ENCODE measurements at regions of chr10 and their contacts with region 1.

Region 1: GRCh38 chr10:71753091-71753959 is 20.0 kb downstream of the VSIR start:
- DNase-seq: peak; percentile 64 to 74
- H3K4me3 ChIP-seq: no peak overlapping the region
- H3K4me3 Mint-ChIP-seq: peak overlapping the region; percentile 46
- H3K27ac Mint-ChIP-seq: peak overlapping the region; percentile 88
- H3K4me1 ChIP-seq: peaks cover 36% of the 10 kb centered on the region
- H3K4me1 Mint-ChIP-seq: peaks cover 40% of the 10 kb centered on the region
- H3K27me3 ChIP-seq: no peaks in the 10 kb centered on the region
- H3K27me3 Mint-ChIP-seq: no peaks in the 10 kb centered on the region
- CTCF ChIP-seq: peak in 1 of 2 experiments; percentile 21

Region 2: GRCh38 chr10:71727738-71728737 is 25.3 kb before region 1 on chr10:
- CTCF ChIA-PET with region 1: no interaction called
- POLR2A ChIA-PET with region 1: no interaction called
- intact Hi-C with region 1: loop called (anchors 2 kb)
- DNase-seq: no peak
- H3K4me3 ChIP-seq: no peak overlapping the region
- H3K4me3 Mint-ChIP-seq: no peak overlapping the region
- H3K27ac Mint-ChIP-seq: no peak overlapping the region
- H3K4me1 ChIP-seq: peaks cover 17% of the 10 kb centered on the region
- H3K4me1 Mint-ChIP-seq: peaks cover 15% of the 10 kb centered on the region
- H3K27me3 ChIP-seq: no peaks in the 10 kb centered on the region
- H3K27me3 Mint-ChIP-seq: no peaks in the 10 kb centered on the region
- CTCF ChIP-seq: no peak

Region 3: GRCh38 chr10:71766702-71767419 is 13.5 kb after region 1 on chr10:
- CTCF ChIA-PET with region 1: interaction called, 12 read pairs
- POLR2A ChIA-PET with region 1: interaction called, 3 read pairs
- intact Hi-C with region 1: loop called (anchors 1 kb)
- DNase-seq: peak; percentile 95 to 98
- H3K4me3 ChIP-seq: no peak overlapping the region
- H3K4me3 Mint-ChIP-seq: peak overlapping the region; percentile 64
- H3K27ac Mint-ChIP-seq: peak overlapping the region; percentile 98
- H3K4me1 ChIP-seq: peaks cover 69% of the 10 kb centered on the region
- H3K4me1 Mint-ChIP-seq: peaks cover 35% of the 10 kb centered on the region
- H3K27me3 ChIP-seq: no peaks in the 10 kb centered on the region
- H3K27me3 Mint-ChIP-seq: no peaks in the 10 kb centered on the region
- CTCF ChIP-seq: no peak

Region 4: GRCh38 chr10:71771821-71772617 is 18.7 kb after region 1 on chr10:
- CTCF ChIA-PET with region 1: interaction called, 12 read pairs
- POLR2A ChIA-PET with region 1: no interaction called
- intact Hi-C with region 1: loop called (anchors 1 kb)
- DNase-seq: no peak
- H3K4me3 ChIP-seq: peak overlapping the region; percentile 56; the same call in 1 of the 2 replicates
- H3K4me3 Mint-ChIP-seq: peak overlapping the region; percentile 70
- H3K27ac Mint-ChIP-seq: peak overlapping the region; percentile 1
- H3K4me1 ChIP-seq: peaks cover 65% of the 10 kb centered on the region
- H3K4me1 Mint-ChIP-seq: peaks cover 27% of the 10 kb centered on the region
- H3K27me3 ChIP-seq: no peaks in the 10 kb centered on the region
- H3K27me3 Mint-ChIP-seq: no peaks in the 10 kb centered on the region
- CTCF ChIP-seq: no peak

Measured in Caco-2 (cell line).